ENCODE measurements at regions of chr16 and their contacts with region 1.

Region 1: GRCh38 chr16:27639561-27640276 is 89.8 kb downstream of the KATNIP start:
- DNase-seq: no peak
- ATAC-seq: peak; percentile 71

Region 2: DNA sequence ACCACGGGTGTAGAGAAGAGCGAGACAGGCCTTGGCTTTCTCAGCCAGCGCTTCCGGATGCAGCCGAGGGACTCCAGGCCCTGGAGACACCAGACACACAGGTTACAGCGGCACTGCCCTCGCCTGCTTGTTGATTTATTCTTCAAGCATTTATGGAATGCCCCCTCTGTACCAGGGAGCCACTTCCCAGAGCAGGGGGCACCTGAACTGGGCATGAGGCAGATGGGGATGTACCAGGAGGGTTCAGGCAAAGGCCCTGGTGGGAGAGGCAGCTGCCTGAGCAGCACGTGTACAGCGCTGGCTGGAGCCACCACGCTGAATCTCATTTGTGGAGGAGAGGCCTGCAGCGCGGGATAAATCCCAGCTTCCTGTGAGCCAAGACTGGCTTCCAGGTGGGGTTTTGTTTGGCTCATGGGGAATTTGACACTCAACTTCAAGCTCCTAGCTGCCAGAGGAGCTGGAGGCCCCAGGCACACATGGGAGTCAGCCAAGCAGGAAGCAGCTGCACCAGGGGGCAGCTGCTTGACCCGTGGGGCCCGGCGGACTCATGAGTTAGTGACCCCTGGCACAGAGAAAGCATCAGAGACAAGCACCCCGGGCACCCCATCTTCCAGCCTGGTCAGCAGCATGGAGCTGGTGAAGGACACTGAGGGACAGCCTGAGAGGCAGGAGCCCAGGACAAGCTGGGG is 178.1 kb before region 1 on chr16:
- intact Hi-C with region 1: no loop called
- DNase-seq: no peak
- ATAC-seq: peak; percentile 34

Region 3: GRCh38 chr16:27549859-27550581 is 89.7 kb before region 1 on chr16 and contains the starts of genes GTF3C1 and KATNIP:
- intact Hi-C with region 1: loop called (anchors 10 kb)
- DNase-seq: peak; percentile 100
- ATAC-seq: peak; percentile 100
- total RNA-seq, gene GTF3C1: 54.0 TPM
- total RNA-seq, gene KATNIP: 30.2 TPM

Region 4: DNA sequence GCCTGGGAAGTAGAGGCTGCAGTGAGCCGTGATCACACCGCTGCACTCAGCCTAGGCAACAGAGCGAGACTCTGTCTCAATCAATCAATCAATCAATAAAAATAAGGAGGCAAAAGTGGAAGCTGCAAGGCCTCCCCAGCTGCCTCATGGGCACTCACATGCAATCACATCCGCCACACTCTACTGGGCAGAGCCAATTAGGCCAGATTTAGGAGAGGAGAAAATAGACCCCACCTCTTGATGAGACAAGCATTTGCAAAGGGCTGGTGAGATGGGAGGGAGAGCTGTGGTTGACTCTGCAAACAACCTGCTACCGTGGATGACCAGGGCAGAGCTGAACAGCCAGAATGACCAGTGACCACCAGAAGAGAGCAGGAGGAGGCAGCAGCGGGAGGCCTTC is 438.5 kb after region 1 on chr16:
- intact Hi-C with region 1: loop called (anchors 5 kb)
- DNase-seq: no peak
- ATAC-seq: no peak

Measured in sciatic nerve (tissue), 2 donors.